Naive thymus-derived CD4-positive, alpha-beta T cell (primary cell): ENCODE measurements at regions of chr14 and their contacts with region 1.

Region 1: DNA sequence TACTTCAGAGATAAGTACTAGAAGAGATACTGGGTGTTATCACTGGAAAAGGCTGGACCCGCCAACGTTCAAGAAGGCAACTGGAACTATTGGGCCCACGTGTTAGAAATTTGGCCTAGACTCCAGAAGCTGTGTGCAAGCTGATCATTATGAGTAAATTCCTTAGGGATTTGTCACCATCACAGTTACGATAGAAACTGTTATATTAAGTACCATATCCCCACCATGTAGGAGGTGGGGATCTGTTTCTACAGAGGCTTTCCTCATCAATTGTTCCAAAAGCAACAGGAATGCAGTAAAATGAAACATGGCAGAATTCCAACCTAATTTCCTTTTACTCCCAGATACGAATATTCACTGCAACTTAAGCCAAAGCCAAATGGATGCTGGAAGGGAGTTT is 170.7 kb downstream of the NOVA1 start:
- DNase-seq: no peak
- ATAC-seq: no peak
- H3K4me3 ChIP-seq: no peak overlapping the region
- H3K4me3 Mint-ChIP-seq: no peak overlapping the region
- H3K27ac ChIP-seq: no peak overlapping the region
- H3K27ac Mint-ChIP-seq: no peak overlapping the region
- H3K4me1 ChIP-seq: no peaks in the 10 kb centered on the region
- H3K4me1 Mint-ChIP-seq: no peaks in the 10 kb centered on the region
- H3K27me3 ChIP-seq: no peaks in the 10 kb centered on the region
- H3K27me3 Mint-ChIP-seq: no peaks in the 10 kb centered on the region

Region 2: GRCh38 chr14:24976602-24977001 is 1450.5 kb before region 1 on chr14:
- CTCF ChIA-PET with region 1: interaction called, 11 read pairs
- POLR2A ChIA-PET with region 1: no interaction called
- intact Hi-C with region 1: no loop called
- DNase-seq: no peak
- ATAC-seq: no peak
- H3K4me3 ChIP-seq: no peak overlapping the region
- H3K4me3 Mint-ChIP-seq: no peak overlapping the region
- H3K27ac ChIP-seq: no peak overlapping the region
- H3K27ac Mint-ChIP-seq: no peak overlapping the region
- H3K4me1 ChIP-seq: no peaks in the 10 kb centered on the region
- H3K4me1 Mint-ChIP-seq: no peaks in the 10 kb centered on the region
- H3K27me3 ChIP-seq: no peaks in the 10 kb centered on the region
- H3K27me3 Mint-ChIP-seq: peaks cover 9 to 33% (median 20%) of the 10 kb centered on the region in 5 donors

Region 3: GRCh38 chr14:25250516-25250915 is 1176.6 kb before region 1 on chr14:
- CTCF ChIA-PET with region 1: no interaction called
- POLR2A ChIA-PET with region 1: no interaction called
- intact Hi-C with region 1: no loop called
- DNase-seq: no peak
- ATAC-seq: no peak
- H3K4me3 ChIP-seq: no peak overlapping the region
- H3K4me3 Mint-ChIP-seq: no peak overlapping the region
- H3K27ac ChIP-seq: no peak overlapping the region
- H3K27ac Mint-ChIP-seq: no peak overlapping the region
- H3K4me1 ChIP-seq: no peaks in the 10 kb centered on the region
- H3K4me1 Mint-ChIP-seq: no peaks in the 10 kb centered on the region
- H3K27me3 ChIP-seq: no peaks in the 10 kb centered on the region
- H3K27me3 Mint-ChIP-seq: peaks cover 0 to 7% (median 6%) of the 10 kb centered on the region in 5 donors

Region 4: DNA sequence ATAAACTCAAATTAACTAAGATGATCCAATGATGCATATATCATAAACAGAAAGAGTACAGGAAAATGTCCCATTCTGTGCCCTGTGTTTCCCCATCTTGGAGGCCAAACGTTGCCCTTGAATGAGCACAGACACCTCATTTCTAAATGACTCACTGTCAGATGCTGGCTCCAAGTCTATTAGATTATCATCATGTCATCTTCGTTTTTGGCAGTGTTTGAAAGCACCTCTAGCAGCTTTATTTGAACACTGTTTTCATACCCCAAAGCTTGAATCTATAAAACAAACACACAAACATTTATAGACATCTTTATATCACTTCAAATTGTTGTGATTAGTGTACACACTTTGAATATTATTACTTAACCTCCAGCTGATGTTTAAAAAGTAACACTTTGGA is 253.5 kb before region 1 on chr14:
- CTCF ChIA-PET with region 1: no interaction called
- POLR2A ChIA-PET with region 1: no interaction called
- intact Hi-C with region 1: no loop called
- DNase-seq: no peak
- ATAC-seq: no peak
- H3K4me3 ChIP-seq: no peak overlapping the region
- H3K4me3 Mint-ChIP-seq: no peak overlapping the region
- H3K27ac ChIP-seq: no peak overlapping the region
- H3K27ac Mint-ChIP-seq: no peak overlapping the region
- H3K4me1 ChIP-seq: no peaks in the 10 kb centered on the region
- H3K4me1 Mint-ChIP-seq: no peaks in the 10 kb centered on the region
- H3K27me3 ChIP-seq: no peaks in the 10 kb centered on the region
- H3K27me3 Mint-ChIP-seq: no peaks in the 10 kb centered on the region